ENCODE measurements at regions of chr2 and their contacts with region 1.

Region 1: DNA sequence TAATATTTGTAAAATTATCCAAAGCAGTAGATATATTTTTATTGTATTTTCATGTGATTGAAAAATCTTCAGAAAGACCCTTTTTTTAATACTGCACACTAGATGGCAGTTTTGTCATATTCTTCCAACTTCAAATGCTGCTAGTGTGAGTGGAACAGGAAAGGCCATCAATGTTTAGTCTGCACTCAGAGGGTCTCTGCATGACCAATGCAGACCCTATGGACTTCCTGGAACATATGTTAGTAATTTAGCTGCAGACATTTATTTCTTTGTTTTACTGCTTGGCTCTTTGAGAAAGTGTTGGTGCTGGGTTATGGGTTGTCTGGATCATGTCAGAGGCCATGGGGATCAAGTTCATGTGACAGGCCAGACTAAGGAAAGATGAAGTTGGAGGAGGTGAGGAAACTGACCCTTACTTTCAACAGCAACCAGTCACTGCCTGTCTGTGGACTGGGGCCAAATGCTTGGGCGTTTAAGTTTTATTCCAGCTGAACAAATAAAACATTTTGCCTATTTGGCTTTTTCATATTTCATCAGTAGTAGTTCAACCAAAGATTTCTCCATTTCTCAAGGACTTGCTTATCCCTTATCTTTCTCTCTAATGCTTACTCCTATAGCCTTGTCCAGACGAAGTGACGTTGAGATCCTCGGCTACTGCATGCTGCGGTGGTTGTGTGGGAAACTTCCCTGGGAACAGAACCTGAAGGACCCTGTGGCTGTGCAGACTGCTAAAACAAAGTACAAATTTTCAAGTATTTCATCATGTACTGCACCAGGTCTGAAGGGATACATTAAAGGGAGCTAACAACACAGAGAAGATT is 84.8 kb downstream of the VRK2 start:
- DNase-seq: no peak
- ATAC-seq: no peak
- H3K4me3 ChIP-seq: no peak overlapping the region
- H3K27ac ChIP-seq: no peak overlapping the region
- H3K4me1 ChIP-seq: peaks cover 0 to 3% of the 10 kb centered on the region in 2 experiments; a peak in 1 of 4 replicates
- H3K27me3 ChIP-seq: no peaks in the 10 kb centered on the region
- CTCF ChIP-seq: peak in 2 of 3 experiments; percentile 31 to 36; a peak in 2 of 6 replicates
- POLR2A ChIP-seq: no peak
- RAD21 ChIP-seq: peak; percentile 65

Region 2: GRCh38 chr2:58146707-58147106 is 15.3 kb after region 1 on chr2:
- CTCF ChIA-PET with region 1: no interaction called
- POLR2A ChIA-PET with region 1: no interaction called
- RAD21 ChIA-PET with region 1: no interaction called
- intact Hi-C with region 1: loop called (anchors 1 kb)
- DNase-seq: peak; percentile 19
- ATAC-seq: peak; percentile 69
- H3K4me3 ChIP-seq: no peak overlapping the region
- H3K27ac ChIP-seq: no peak overlapping the region
- H3K4me1 ChIP-seq: peaks cover 7 to 12% of the 10 kb centered on the region in 2 experiments
- H3K27me3 ChIP-seq: no peaks in the 10 kb centered on the region
- CTCF ChIP-seq: no peak
- POLR2A ChIP-seq: no peak
- RAD21 ChIP-seq: no peak

Region 3: GRCh38 chr2:58304843-58305242 is 173.4 kb after region 1 on chr2:
- CTCF ChIA-PET with region 1: no interaction called
- POLR2A ChIA-PET with region 1: no interaction called
- RAD21 ChIA-PET with region 1: no interaction called
- intact Hi-C with region 1: no loop called
- DNase-seq: no peak
- ATAC-seq: no peak
- H3K4me3 ChIP-seq: no peak overlapping the region
- H3K27ac ChIP-seq: no peak overlapping the region
- H3K4me1 ChIP-seq: no peaks in the 10 kb centered on the region
- H3K27me3 ChIP-seq: no peaks in the 10 kb centered on the region
- CTCF ChIP-seq: no peak
- POLR2A ChIP-seq: no peak
- RAD21 ChIP-seq: no peak

Region 4: GRCh38 chr2:58387705-58388104 is 256.3 kb after region 1 on chr2:
- CTCF ChIA-PET with region 1: no interaction called
- POLR2A ChIA-PET with region 1: no interaction called
- RAD21 ChIA-PET with region 1: no interaction called
- intact Hi-C with region 1: no loop called
- DNase-seq: no peak
- ATAC-seq: no peak
- H3K4me3 ChIP-seq: no peak overlapping the region
- H3K27ac ChIP-seq: no peak overlapping the region
- H3K4me1 ChIP-seq: no peaks in the 10 kb centered on the region
- H3K27me3 ChIP-seq: no peaks in the 10 kb centered on the region
- CTCF ChIP-seq: no peak
- POLR2A ChIP-seq: no peak
- RAD21 ChIP-seq: no peak

Region 5: DNA sequence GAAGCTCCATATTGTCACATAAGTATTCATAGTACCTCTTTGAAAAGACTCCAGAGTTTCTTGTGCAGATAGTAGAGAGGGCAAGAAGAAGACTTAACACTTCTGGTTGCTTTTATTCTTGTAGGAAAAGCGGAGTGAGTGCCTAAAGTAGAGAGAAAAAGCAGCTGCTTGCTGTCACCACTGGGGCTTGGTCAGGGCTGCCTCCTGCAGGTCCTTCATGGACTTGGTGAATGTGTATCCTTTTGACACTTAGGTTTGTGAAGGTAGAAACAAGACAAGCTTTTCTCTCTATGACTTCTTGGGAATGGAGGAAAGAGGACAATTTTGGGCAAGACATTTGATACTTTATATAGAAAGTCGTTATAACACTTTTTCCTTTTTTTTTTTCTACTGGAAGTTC is 422.5 kb after region 1 on chr2:
- CTCF ChIA-PET with region 1: interaction called, 3 read pairs
- POLR2A ChIA-PET with region 1: no interaction called
- RAD21 ChIA-PET with region 1: no interaction called
- intact Hi-C with region 1: loop called (anchors 10 kb)
- DNase-seq: peak; percentile 7
- ATAC-seq: peak; percentile 72
- H3K4me3 ChIP-seq: no peak overlapping the region
- H3K27ac ChIP-seq: no peak overlapping the region
- H3K4me1 ChIP-seq: no peaks in the 10 kb centered on the region
- H3K27me3 ChIP-seq: no peaks in the 10 kb centered on the region
- CTCF ChIP-seq: peak; percentile 35 to 56 (median 53); a peak in 5 of 6 replicates
- POLR2A ChIP-seq: no peak
- RAD21 ChIP-seq: peak; percentile 54